ENCODE measurements at regions of chr2 and their contacts with region 1.

Region 1: GRCh38 chr2:3303583-3304406 is 73.8 kb downstream of the EIPR1 start:
- DNase-seq: peak; percentile 56
- H3K4me3 Mint-ChIP-seq: no peak overlapping the region
- H3K27ac Mint-ChIP-seq: peak overlapping the region; percentile 52
- H3K4me1 Mint-ChIP-seq: peaks cover 9% of the 10 kb centered on the region
- H3K27me3 Mint-ChIP-seq: no peaks in the 10 kb centered on the region

Region 2: DNA sequence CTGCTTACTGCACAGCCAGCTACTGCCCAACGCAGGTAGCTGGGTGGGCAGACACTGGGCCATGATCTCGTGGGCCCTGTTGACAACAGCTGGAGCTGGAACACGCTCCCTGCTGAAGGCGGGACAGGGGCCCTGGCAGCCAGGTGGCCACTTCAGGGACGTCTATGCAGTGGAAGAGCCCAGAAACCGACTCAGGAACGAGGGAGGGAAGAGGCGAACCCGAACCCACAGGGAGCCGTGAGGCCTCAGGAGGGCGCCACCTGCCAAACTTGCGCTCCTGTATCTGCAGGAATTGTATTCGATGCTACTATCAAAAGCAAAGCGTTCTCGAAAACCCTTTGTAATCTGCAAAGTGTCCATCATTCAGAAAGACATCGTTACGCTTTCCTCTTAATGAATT is 124.6 kb before region 1 on chr2:
- intact Hi-C with region 1: loop called (anchors 1 kb)
- DNase-seq: no peak
- H3K4me3 Mint-ChIP-seq: no peak overlapping the region
- H3K27ac Mint-ChIP-seq: no peak overlapping the region
- H3K4me1 Mint-ChIP-seq: no peaks in the 10 kb centered on the region
- H3K27me3 Mint-ChIP-seq: no peaks in the 10 kb centered on the region

Region 3: DNA sequence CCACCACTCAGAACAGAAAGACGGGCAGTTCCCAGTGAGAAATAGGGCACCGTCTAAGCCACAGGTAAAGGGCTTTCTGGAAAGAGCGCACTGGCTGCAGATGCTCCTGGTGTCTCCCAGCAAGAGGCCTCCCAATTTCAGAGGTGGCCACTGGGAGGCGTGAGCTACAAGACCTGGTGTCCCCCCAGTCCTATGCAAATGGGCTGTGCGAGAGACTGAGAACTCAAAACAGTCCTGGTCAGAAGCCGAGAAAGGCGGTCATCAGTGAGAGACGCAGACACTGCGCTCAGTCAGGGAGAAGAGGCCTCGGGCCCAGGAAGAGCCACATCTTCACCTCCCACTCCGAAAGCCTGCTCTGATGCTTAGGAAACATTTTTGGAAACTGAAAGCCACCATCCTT is 105.7 kb before region 1 on chr2:
- intact Hi-C with region 1: loop called (anchors 1 kb)
- DNase-seq: no peak
- H3K4me3 Mint-ChIP-seq: no peak overlapping the region
- H3K27ac Mint-ChIP-seq: no peak overlapping the region
- H3K4me1 Mint-ChIP-seq: no peaks in the 10 kb centered on the region
- H3K27me3 Mint-ChIP-seq: no peaks in the 10 kb centered on the region